Right ventricle myocardium superior (tissue), 1 donor: ENCODE measurements at regions of chr20 and their contacts with region 1.

Region 1: GRCh38 chr20:58907399-58908137 is 55.1 kb downstream of the GNAS start:
- DNase-seq: peak; percentile 86
- ATAC-seq: peak; percentile 96

Region 2: GRCh38 chr20:58721951-58722778 is 185.4 kb before region 1 on chr20:
- intact Hi-C with region 1: no loop called
- DNase-seq: peak; percentile 42
- ATAC-seq: peak; percentile 48

Region 3: GRCh38 chr20:58790454-58790853 is 117.1 kb before region 1 on chr20:
- intact Hi-C with region 1: no loop called
- DNase-seq: no peak
- ATAC-seq: no peak

Region 4: DNA sequence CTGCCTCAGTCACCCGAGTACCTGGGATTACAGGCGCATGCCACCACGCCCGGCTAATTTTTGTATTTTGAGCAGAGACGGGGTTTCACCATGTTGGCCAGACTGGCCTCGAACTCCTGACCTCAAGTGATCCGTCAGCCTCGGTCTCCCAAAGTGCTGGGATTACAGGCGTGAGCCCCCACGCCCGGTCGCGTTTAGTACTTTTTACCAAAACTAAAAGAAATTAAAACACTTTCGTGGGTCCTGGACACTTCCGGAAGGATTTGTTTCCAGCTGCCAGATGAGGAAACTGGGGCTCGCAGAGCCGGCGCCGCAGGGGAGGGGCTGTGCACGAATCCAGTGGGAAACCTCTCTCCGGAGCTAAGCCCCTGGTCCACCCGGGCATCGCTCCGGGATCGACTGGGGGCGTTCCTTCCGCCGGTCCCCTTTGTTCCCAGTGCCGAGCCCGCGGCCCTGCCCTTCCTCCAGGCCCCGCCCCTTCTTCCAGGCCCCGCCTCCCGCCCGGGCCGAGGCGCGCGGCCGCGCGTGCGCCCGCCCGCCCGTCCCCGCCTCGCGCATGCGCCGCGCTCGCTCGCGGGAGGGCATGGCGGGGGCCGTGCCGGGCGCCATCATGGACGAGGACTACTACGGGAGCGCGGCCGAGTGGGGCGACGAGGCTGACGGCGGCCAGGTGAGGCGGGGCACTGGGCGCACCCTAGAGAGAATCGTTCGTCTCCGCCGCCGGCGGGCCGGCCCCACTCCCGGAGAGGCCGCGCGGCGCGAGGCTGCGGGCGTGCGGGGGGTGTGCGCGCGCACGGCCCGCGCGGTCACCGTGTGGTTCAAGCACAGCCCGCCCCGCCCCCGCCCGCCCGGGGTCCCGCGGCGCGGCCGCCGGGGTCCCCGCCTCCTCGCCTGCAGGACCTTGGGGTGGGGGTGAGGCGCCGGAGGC is 73.4 kb after region 1 on chr20 and contains the start of gene NELFCD:
- intact Hi-C with region 1: loop called (anchors 5 kb)
- DNase-seq: peak; percentile 94
- ATAC-seq: peak; percentile 96
- total RNA-seq, gene NELFCD: 29.0 TPM

Region 5: DNA sequence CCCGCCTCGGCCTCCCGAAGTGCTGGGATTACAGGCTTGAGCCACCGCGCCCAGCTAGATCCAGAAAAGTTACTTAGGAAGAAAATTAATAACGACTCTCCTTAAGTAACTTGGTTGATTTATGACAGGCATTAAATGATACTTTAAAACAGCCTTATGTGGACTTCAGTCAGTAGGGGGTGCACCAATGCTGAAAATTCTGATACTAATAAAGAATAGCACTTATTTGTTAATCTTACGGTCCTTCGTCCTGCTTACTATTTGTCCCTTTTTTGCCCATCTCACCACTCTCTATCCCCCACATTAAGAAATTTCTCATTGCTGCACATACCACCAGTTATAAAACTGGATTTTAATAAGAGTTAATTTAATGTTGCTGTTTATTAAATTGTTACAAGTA is 147.7 kb after region 1 on chr20:
- intact Hi-C with region 1: no loop called
- DNase-seq: no peak
- ATAC-seq: no peak

Region 6: GRCh38 chr20:59866338-59866737 is 958.8 kb after region 1 on chr20:
- intact Hi-C with region 1: no loop called
- DNase-seq: no peak
- ATAC-seq: no peak